ENCODE measurements at regions of chr16 and their contacts with region 1.

Region 1: GRCh38 chr16:72832621-72833248 is 215.2 kb downstream of the ZFHX3 start:
- DNase-seq: peak; percentile 56
- H3K4me3 Mint-ChIP-seq: no peak overlapping the region
- H3K27ac Mint-ChIP-seq: no peak overlapping the region
- H3K4me1 Mint-ChIP-seq: peaks cover 12% of the 10 kb centered on the region
- H3K27me3 Mint-ChIP-seq: peaks cover 3% of the 10 kb centered on the region

Region 2: GRCh38 chr16:72501739-72502593 is 330.8 kb before region 1 on chr16:
- intact Hi-C with region 1: loop called (anchors 10 kb)
- DNase-seq: no peak
- H3K4me3 Mint-ChIP-seq: no peak overlapping the region
- H3K27ac Mint-ChIP-seq: no peak overlapping the region
- H3K4me1 Mint-ChIP-seq: no peaks in the 10 kb centered on the region
- H3K27me3 Mint-ChIP-seq: no peaks in the 10 kb centered on the region

Region 3: GRCh38 chr16:72847187-72848027 is 14.7 kb after region 1 on chr16:
- intact Hi-C with region 1: loop called (anchors 1 kb)
- DNase-seq: no peak
- H3K4me3 Mint-ChIP-seq: no peak overlapping the region
- H3K27ac Mint-ChIP-seq: no peak overlapping the region
- H3K4me1 Mint-ChIP-seq: peaks cover 27% of the 10 kb centered on the region
- H3K27me3 Mint-ChIP-seq: peaks cover 4% of the 10 kb centered on the region

Region 4: GRCh38 chr16:73058221-73058615 is 225.5 kb after region 1 on chr16:
- intact Hi-C with region 1: loop called (anchors 10 kb)
- DNase-seq: peak; percentile 26
- H3K4me3 Mint-ChIP-seq: peak overlapping the region; percentile 35
- H3K27ac Mint-ChIP-seq: no peak overlapping the region
- H3K4me1 Mint-ChIP-seq: peaks cover 15% of the 10 kb centered on the region
- H3K27me3 Mint-ChIP-seq: peaks cover 76% of the 10 kb centered on the region

Region 5: DNA sequence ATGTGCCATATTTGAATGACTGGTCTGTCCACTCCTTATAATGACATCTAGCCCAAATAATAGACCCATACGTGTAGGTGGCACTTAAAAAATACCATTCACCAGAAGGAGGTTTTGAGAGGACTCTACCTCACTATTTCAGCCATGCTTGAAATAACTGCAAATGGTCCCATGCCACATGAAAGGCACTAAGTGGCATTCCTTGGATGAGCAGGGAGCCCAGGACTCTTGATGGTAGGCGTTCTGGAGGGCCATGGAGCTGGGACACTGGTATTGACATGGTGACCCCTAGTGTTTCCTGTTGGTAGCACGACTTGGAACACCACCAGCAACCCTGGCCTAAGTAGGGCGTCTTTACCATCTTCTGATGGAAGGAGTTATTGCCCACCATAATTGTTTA is 363.9 kb after region 1 on chr16:
- intact Hi-C with region 1: loop called (anchors 10 kb)
- DNase-seq: no peak
- H3K4me3 Mint-ChIP-seq: no peak overlapping the region
- H3K27ac Mint-ChIP-seq: no peak overlapping the region
- H3K4me1 Mint-ChIP-seq: no peaks in the 10 kb centered on the region
- H3K27me3 Mint-ChIP-seq: no peaks in the 10 kb centered on the region

Region 6: DNA sequence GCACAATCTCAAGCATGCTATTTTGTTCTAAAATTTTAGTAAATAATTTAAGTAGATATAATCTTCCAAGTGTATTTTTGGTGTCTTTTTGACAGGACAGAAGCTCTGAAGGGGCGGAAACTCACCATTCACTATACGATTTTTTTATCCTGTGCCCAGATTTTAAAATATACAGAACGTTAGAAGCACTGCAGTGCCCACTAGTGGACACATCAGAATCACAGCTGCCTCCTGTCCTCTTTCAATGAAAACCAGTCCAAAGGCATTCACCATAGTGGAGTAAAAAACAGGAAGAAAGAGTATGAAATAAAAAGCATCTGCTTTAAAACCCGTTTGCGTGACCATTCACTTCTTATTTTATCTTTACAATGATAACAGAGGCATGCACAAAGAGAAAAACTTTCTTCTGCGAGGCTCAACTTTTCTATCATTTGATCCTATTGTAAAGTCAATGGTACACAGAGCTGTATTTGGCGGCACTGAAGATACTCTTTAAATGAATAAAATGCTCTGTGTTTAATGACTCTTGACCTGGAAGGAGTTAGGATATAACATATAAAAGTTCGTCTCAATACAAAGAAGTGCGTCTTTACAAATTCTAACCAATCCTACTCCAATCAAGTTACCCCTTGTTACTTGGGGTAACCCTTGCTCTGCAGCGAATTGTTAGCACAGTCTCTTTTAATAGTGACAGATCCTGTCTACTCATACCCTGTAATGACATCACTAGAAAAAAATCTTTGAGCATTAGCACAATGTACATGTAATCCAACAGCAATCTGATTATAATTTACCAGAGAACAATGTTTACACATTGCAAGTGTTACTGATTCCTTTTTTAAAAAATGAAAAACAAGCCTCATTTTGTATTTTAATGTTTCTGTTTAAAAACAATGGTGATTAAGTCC is 1124.1 kb after region 1 on chr16:
- intact Hi-C with region 1: loop called (anchors 5 kb)
- DNase-seq: peak; percentile 9
- H3K4me3 Mint-ChIP-seq: no peak overlapping the region
- H3K27ac Mint-ChIP-seq: no peak overlapping the region
- H3K4me1 Mint-ChIP-seq: no peaks in the 10 kb centered on the region
- H3K27me3 Mint-ChIP-seq: no peaks in the 10 kb centered on the region

Measured in activated T-helper 2 cell treated with anti-CD3 and anti-CD28 coated beads, Interferon-gamma antibody, Interleukin-2, Interleukin-4, amounts not matched to agents 10 μg/mL and 5 μg/mL and 100 μg/mL, durations not matched to agents 14 hours and 24 hours and 36 hours (primary cell).